Activated CD8-positive, alpha-beta T cell treated with anti-CD3 and anti-CD28 coated beads for 36 hours (primary cell): ENCODE measurements at regions of chr20 and their contacts with region 1.

Region 1: GRCh38 chr20:50115591-50116372 is 2.8 kb upstream of the UBE2V1 start:
- DNase-seq: peak; percentile 96
- ATAC-seq: peak; percentile 79
- H3K4me3 Mint-ChIP-seq: peak overlapping the region; percentile 94
- H3K27ac Mint-ChIP-seq: peak overlapping the region; percentile 93
- H3K4me1 Mint-ChIP-seq: peaks cover 44% of the 10 kb centered on the region
- H3K27me3 Mint-ChIP-seq: no peaks in the 10 kb centered on the region
- CTCF ChIP-seq: no peak

Region 2: GRCh38 chr20:50027611-50028105 is 88.1 kb before region 1 on chr20:
- CTCF ChIA-PET with region 1: no interaction called
- POLR2A ChIA-PET with region 1: no interaction called
- intact Hi-C with region 1: no loop called
- DNase-seq: no peak
- ATAC-seq: no peak
- H3K4me3 Mint-ChIP-seq: no peak overlapping the region
- H3K27ac Mint-ChIP-seq: no peak overlapping the region
- H3K4me1 Mint-ChIP-seq: no peaks in the 10 kb centered on the region
- H3K27me3 Mint-ChIP-seq: no peaks in the 10 kb centered on the region
- CTCF ChIP-seq: no peak

Region 3: GRCh38 chr20:50095476-50096078 is 20.2 kb before region 1 on chr20:
- CTCF ChIA-PET with region 1: interaction called, 3 read pairs
- POLR2A ChIA-PET with region 1: interaction called, 42 read pairs
- intact Hi-C with region 1: no loop called
- DNase-seq: no peak
- ATAC-seq: no peak
- H3K4me3 Mint-ChIP-seq: no peak overlapping the region
- H3K27ac Mint-ChIP-seq: peak overlapping the region; percentile 17
- H3K4me1 Mint-ChIP-seq: peaks cover 34% of the 10 kb centered on the region
- H3K27me3 Mint-ChIP-seq: no peaks in the 10 kb centered on the region
- CTCF ChIP-seq: no peak

Region 4: DNA sequence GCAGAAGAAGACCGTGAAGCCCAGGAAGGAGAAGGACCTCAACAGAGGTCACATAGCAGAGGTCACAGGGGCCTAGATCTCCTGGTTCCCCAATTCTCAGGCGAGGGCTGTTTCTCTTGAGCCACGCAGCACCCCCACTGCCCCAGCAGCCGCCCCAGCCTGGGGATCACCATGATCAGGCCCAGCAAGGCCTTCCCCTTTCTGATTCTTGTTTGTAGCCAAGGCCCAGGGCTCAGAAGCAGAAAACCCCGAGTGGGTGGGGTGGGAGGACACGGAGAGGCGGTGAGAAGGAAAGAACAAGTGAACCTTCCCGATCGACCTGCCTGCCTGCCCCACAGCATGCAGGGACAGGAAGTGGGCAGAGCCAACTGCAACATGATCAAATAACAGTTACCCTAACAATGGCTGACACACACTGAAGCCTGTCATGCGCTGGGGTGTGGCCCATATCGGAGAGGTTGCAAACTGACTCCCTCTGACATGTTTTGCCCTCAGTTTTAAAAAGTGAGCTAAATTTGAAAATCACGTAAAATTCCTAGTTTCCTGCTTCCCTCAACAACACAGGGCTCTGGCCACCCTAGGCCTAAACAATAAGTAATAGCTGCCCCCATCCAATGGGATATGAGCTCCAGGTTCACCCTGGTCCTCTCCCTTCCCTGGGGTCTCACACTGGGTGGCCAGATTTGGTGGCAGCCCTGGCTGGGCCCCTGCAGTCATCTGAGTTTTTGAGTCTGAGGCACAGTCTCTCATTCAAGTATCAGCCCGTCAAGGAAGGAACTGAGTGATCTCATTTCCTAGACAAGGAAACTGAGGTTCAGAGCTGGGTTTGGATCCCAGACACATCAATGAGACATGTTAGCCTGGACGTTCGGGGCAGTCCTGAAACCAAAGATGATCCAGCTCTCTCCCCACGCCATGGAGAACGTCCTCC is 31.2 kb after region 1 on chr20:
- CTCF ChIA-PET with region 1: interaction called, 67 read pairs
- POLR2A ChIA-PET with region 1: interaction called, 9 read pairs
- intact Hi-C with region 1: loop called (anchors 5 kb)
- DNase-seq: peak; percentile 87
- ATAC-seq: peak; percentile 99
- H3K4me3 Mint-ChIP-seq: peak overlapping the region; percentile 71
- H3K27ac Mint-ChIP-seq: peak overlapping the region; percentile 98
- H3K4me1 Mint-ChIP-seq: peaks cover 56% of the 10 kb centered on the region
- H3K27me3 Mint-ChIP-seq: no peaks in the 10 kb centered on the region
- CTCF ChIP-seq: no peak

Region 5: DNA sequence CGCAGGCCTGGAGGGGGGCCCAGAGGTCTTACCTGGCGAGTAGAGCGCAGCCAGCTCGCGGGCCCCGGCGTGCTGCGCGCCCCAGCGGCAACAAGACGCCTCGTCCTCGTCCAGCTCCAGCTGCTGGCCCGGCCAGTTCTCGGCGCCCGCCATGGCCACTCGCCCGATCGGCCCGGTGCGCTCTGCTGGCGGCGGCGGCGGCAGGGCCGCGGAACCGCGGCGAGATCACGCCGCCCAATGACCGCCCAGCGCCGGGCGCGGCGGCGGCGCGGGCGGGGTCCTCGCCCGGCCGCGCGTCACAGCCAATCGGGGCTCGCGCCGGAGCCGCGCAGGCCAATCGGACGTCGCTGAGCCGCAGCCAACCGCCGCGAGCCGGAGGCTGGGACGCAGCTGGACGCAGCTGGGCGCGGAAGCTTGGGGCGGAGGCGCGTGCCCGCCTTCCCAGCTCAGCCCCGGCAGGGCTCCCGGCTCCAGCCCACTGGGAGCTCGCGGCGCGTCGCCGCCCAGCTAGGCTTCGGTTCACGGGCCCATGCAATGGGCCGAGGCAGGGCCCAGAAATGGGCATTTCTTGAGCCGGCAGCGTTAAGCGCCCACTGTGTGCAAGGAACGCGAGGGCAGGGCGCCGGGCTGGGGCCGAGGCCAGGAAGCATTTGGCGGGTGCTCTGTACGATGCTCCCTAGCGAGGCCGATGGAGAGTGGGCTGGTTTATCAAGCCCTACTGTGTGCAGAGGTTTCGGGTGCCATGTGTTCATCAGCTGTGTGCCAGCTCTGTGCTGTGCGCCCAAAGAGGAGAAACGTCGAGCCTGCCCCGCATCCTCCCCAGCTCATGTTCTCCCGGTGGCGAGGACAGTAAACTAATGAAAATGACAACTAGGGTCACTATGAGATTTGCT is 37.9 kb after region 1 on chr20 and contains the start of gene PEDS1:
- CTCF ChIA-PET with region 1: interaction called, 67 read pairs
- POLR2A ChIA-PET with region 1: interaction called, 15 read pairs
- intact Hi-C with region 1: loop called (anchors 5 kb)
- DNase-seq: peak; percentile 84
- ATAC-seq: peak; percentile 96
- H3K4me3 Mint-ChIP-seq: peak within 1 kb of the TSS; percentile 85
- H3K27ac Mint-ChIP-seq: peak within 1 kb of the TSS; percentile 84
- H3K4me1 Mint-ChIP-seq: peaks cover 35% of the 10 kb centered on the region
- H3K27me3 Mint-ChIP-seq: no peaks in the 10 kb centered on the region
- CTCF ChIP-seq: no peak
- total RNA-seq, gene PEDS1: 16.0 to 17.3 TPM

Region 6: GRCh38 chr20:50260739-50261221 is 145.0 kb after region 1 on chr20:
- CTCF ChIA-PET with region 1: no interaction called
- POLR2A ChIA-PET with region 1: no interaction called
- intact Hi-C with region 1: no loop called
- DNase-seq: peak; percentile 11
- ATAC-seq: no peak
- H3K4me3 Mint-ChIP-seq: no peak overlapping the region
- H3K27ac Mint-ChIP-seq: peak overlapping the region; percentile 26
- H3K4me1 Mint-ChIP-seq: peaks cover 10% of the 10 kb centered on the region
- H3K27me3 Mint-ChIP-seq: no peaks in the 10 kb centered on the region
- CTCF ChIP-seq: no peak